Endothelial cell of umbilical vein (primary cell): ENCODE measurements at regions of chr5 and their contacts with region 1.

Region 1: DNA sequence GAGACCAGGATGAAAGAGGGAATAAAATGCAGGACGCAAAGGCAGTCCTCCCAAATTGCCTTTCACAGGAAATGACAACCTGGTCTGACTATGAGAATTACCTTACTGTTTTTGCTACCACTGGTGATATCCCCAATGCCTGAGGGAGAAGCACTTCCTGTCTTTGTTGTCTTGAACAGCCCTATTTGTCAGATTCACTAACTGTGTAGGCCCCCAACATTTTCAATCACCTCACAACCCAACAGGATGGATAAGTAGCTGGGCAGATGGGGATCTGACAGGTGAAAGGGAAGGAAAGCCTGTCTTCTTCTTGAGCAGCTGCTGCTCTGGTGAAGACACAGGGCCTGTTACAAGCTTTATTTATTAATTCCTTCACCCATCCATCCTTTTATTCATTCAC is 9.7 kb downstream of the ESM1 start:
- DNase-seq: peak; percentile 34
- H3K4me3 ChIP-seq: no peak overlapping the region
- H3K27ac ChIP-seq: no peak overlapping the region
- H3K4me1 ChIP-seq: peaks cover 52% of the 10 kb centered on the region
- H3K27me3 ChIP-seq: no peaks in the 10 kb centered on the region
- CTCF ChIP-seq: no peak
- POLR2A ChIP-seq: peak; percentile 83

Region 2: DNA sequence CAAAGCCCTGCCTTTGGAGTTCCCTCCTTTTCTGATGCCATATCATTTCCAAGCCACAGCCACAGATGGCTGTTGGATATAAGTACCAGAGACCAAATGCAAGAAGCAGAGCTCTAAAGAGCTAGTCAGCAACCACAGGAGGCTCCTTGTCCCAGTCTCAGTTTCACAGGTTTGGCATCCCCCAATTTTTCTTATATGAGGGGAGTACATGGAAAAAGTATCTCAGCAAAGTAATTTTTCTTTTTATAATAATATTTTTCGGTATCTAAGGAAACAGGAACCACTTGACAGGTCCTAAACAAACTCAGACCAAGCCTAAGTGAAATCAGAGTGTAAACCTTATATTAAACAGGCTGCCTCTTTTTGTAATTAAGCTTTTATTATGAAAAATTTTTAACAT is 68.5 kb after region 1 on chr5:
- CTCF ChIA-PET with region 1: no interaction called
- POLR2A ChIA-PET with region 1: no interaction called
- dilution Hi-C with region 1: no loop called
- intact Hi-C with region 1: no loop called
- DNase-seq: no peak
- H3K4me3 ChIP-seq: no peak overlapping the region
- H3K27ac ChIP-seq: no peak overlapping the region
- H3K4me1 ChIP-seq: no peaks in the 10 kb centered on the region
- H3K27me3 ChIP-seq: no peaks in the 10 kb centered on the region
- CTCF ChIP-seq: no peak
- POLR2A ChIP-seq: no peak

Region 3: GRCh38 chr5:55146543-55147151 is 170.9 kb after region 1 on chr5:
- CTCF ChIA-PET with region 1: interaction called, 14 read pairs
- POLR2A ChIA-PET with region 1: no interaction called
- dilution Hi-C with region 1: loop called (anchors 25 kb)
- intact Hi-C with region 1: no loop called
- DNase-seq: peak; percentile 92
- H3K4me3 ChIP-seq: no peak overlapping the region
- H3K27ac ChIP-seq: no peak overlapping the region
- H3K4me1 ChIP-seq: peaks cover 5% of the 10 kb centered on the region
- H3K27me3 ChIP-seq: no peaks in the 10 kb centered on the region
- CTCF ChIP-seq: peak; percentile 90 to 94
- POLR2A ChIP-seq: no peak